ENCODE measurements at regions of chr9 and their contacts with region 1.

Region 1: GRCh38 chr9:105405514-105406131 is 42.2 kb upstream of the FSD1L start:
- DNase-seq: peak; percentile 71
- H3K4me3 ChIP-seq: peak overlapping the region; percentile 29
- H3K27ac ChIP-seq: peak overlapping the region; percentile 85
- H3K4me1 ChIP-seq: peaks cover 56% of the 10 kb centered on the region
- CTCF ChIP-seq: no peak

Region 2: GRCh38 chr9:105254226-105254625 is 151.4 kb before region 1 on chr9:
- CTCF ChIA-PET with region 1: no interaction called
- POLR2A ChIA-PET with region 1: interaction called, 11 read pairs
- intact Hi-C with region 1: no loop called
- DNase-seq: no peak
- H3K4me3 ChIP-seq: no peak overlapping the region
- H3K27ac ChIP-seq: no peak overlapping the region
- H3K4me1 ChIP-seq: peaks cover 70% of the 10 kb centered on the region
- CTCF ChIP-seq: no peak

Region 3: GRCh38 chr9:105535920-105536668 is 130.5 kb after region 1 on chr9:
- CTCF ChIA-PET with region 1: no interaction called
- POLR2A ChIA-PET with region 1: no interaction called
- intact Hi-C with region 1: no loop called
- DNase-seq: no peak
- H3K4me3 ChIP-seq: no peak overlapping the region
- H3K27ac ChIP-seq: no peak overlapping the region
- H3K4me1 ChIP-seq: no peaks in the 10 kb centered on the region
- CTCF ChIP-seq: no peak

Region 4: GRCh38 chr9:105633411-105633810 is 227.8 kb after region 1 on chr9:
- CTCF ChIA-PET with region 1: no interaction called
- POLR2A ChIA-PET with region 1: no interaction called
- intact Hi-C with region 1: no loop called
- DNase-seq: no peak
- H3K4me3 ChIP-seq: no peak overlapping the region
- H3K27ac ChIP-seq: no peak overlapping the region
- H3K4me1 ChIP-seq: no peaks in the 10 kb centered on the region
- CTCF ChIP-seq: no peak

Measured in OCI-LY7 (cell line).